ENCODE measurements at regions of chr15 and their contacts with region 1.

Region 1: GRCh38 chr15:46892687-46893086 is 824.6 kb upstream of the SEMA6D start:
- DNase-seq: no peak
- ATAC-seq: no peak
- H3K4me3 ChIP-seq: no peak overlapping the region
- H3K4me3 Mint-ChIP-seq: no peak overlapping the region
- H3K27ac ChIP-seq: no peak overlapping the region
- H3K27ac Mint-ChIP-seq: no peak overlapping the region
- H3K4me1 ChIP-seq: no peaks in the 10 kb centered on the region
- H3K4me1 Mint-ChIP-seq: no peaks in the 10 kb centered on the region
- H3K27me3 ChIP-seq: no peaks in the 10 kb centered on the region
- H3K27me3 Mint-ChIP-seq: no peaks in the 10 kb centered on the region
- CTCF ChIP-seq: no peak

Region 2: DNA sequence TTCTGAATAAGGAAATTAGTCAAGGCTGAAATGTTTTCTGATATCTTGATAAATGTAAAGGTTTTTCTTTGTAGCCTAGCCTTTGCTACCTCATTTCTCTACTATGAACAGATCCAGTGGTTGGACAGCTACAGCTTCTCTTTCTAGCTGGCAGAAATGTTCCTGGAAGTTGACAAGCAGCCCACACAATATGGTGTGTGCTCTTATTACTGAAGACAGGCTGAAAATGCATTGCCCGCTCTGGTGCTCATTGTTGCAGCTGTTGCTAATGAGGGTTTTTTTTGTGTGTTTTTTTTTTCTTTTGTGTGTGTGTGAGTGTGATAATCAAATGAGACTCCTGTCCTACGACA is 19.7 kb before region 1 on chr15:
- CTCF ChIA-PET with region 1: no interaction called
- POLR2A ChIA-PET with region 1: no interaction called
- intact Hi-C with region 1: loop called in 1 of 2 experiments (anchors 2 kb)
- DNase-seq: no peak
- ATAC-seq: no peak
- H3K4me3 ChIP-seq: no peak overlapping the region
- H3K4me3 Mint-ChIP-seq: no peak overlapping the region
- H3K27ac ChIP-seq: no peak overlapping the region
- H3K27ac Mint-ChIP-seq: no peak overlapping the region
- H3K4me1 ChIP-seq: no peaks in the 10 kb centered on the region
- H3K4me1 Mint-ChIP-seq: no peaks in the 10 kb centered on the region
- H3K27me3 ChIP-seq: no peaks in the 10 kb centered on the region
- H3K27me3 Mint-ChIP-seq: no peaks in the 10 kb centered on the region
- CTCF ChIP-seq: no peak

Region 3: GRCh38 chr15:46941241-46941640 is 48.6 kb after region 1 on chr15:
- CTCF ChIA-PET with region 1: no interaction called
- POLR2A ChIA-PET with region 1: no interaction called
- intact Hi-C with region 1: no loop called
- DNase-seq: no peak
- ATAC-seq: no peak
- H3K4me3 ChIP-seq: no peak overlapping the region
- H3K4me3 Mint-ChIP-seq: no peak overlapping the region
- H3K27ac ChIP-seq: no peak overlapping the region
- H3K27ac Mint-ChIP-seq: no peak overlapping the region
- H3K4me1 ChIP-seq: no peaks in the 10 kb centered on the region
- H3K4me1 Mint-ChIP-seq: no peaks in the 10 kb centered on the region
- H3K27me3 ChIP-seq: no peaks in the 10 kb centered on the region
- H3K27me3 Mint-ChIP-seq: no peaks in the 10 kb centered on the region
- CTCF ChIP-seq: no peak

Measured in CD8-positive, alpha-beta T cell (primary cell).